CD8-positive, alpha-beta T cell (primary cell): ENCODE measurements at regions of chr12 and their contacts with region 1.

Region 1: DNA sequence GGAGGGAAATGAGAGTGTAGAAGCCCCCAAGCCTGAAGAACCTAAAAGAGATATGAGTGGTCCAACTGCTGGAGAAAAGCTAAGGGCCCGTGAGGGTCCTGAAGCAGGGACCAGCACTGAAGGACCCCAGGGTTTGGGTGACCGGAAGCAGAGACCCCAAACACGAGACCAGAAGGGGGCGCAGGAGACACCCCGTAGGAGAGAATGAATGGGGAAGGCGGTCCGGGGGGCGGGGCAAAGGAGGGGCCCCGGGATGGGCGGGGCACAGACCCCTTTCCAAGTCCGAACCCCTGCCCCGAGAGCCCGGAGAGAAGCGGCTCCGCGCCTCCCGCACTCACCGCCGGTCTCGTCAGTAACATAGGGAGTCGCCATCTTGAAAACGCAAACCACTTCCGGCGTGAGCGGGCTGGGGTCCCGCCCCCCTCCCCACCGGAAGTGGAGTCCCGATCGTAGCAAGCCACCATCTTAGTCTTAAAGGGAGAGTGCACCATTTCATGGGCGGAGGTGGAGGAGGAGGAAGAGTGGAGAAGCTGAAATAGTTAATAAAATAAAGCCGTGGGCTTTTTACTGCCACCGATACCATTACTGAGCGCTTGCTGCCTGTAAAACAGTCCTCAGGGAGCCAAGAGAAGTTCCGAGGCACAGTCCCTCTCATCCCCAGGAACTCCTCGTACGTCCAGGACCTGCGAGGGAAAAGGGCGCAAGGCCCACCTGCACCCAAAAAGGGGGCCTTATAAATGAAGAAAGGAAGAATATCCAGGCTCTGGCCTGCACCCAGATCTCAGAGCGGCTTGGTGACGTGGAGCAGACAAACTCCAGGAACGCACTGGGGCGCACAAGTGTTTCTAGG is 731 bp downstream of the PYM1 start:
- DNase-seq: peak; percentile 75 to 96 (median 88)
- ATAC-seq: peak; percentile 35
- H3K4me3 ChIP-seq: peak overlapping the region; percentile 90 to 98
- H3K4me3 Mint-ChIP-seq: peak overlapping the region; percentile 99
- H3K27ac ChIP-seq: peak overlapping the region; percentile 65 to 80
- H3K27ac Mint-ChIP-seq: peak overlapping the region; percentile 95
- H3K4me1 ChIP-seq: peaks cover 40% of the 10 kb centered on the region
- H3K4me1 Mint-ChIP-seq: peaks cover 51% of the 10 kb centered on the region
- H3K27me3 ChIP-seq: no peaks in the 10 kb centered on the region
- H3K27me3 Mint-ChIP-seq: no peaks in the 10 kb centered on the region
- CTCF ChIP-seq: peak; percentile 70

Region 2: GRCh38 chr12:55715833-55716581 is 211.0 kb before region 1 on chr12 and contains the start of gene BLOC1S1:
- CTCF ChIA-PET with region 1: no interaction called
- POLR2A ChIA-PET with region 1: interaction called, 8 read pairs
- intact Hi-C with region 1: loop called in 1 of 2 experiments (anchors 1 kb)
- DNase-seq: peak; percentile 80 to 96 (median 92)
- ATAC-seq: peak; percentile 96
- H3K4me3 ChIP-seq: peak within 1 kb of the TSS; percentile 84 to 90
- H3K4me3 Mint-ChIP-seq: peak within 1 kb of the TSS; percentile 94
- H3K27ac ChIP-seq: peak within 1 kb of the TSS; percentile 67 to 93
- H3K27ac Mint-ChIP-seq: peak within 1 kb of the TSS; percentile 90
- H3K4me1 ChIP-seq: peaks cover 23% of the 10 kb centered on the region
- H3K4me1 Mint-ChIP-seq: peaks cover 36% of the 10 kb centered on the region
- H3K27me3 ChIP-seq: no peaks in the 10 kb centered on the region
- H3K27me3 Mint-ChIP-seq: no peaks in the 10 kb centered on the region
- CTCF ChIP-seq: no peak
- total RNA-seq, gene BLOC1S1: 29.4 to 29.6 TPM

Region 3: DNA sequence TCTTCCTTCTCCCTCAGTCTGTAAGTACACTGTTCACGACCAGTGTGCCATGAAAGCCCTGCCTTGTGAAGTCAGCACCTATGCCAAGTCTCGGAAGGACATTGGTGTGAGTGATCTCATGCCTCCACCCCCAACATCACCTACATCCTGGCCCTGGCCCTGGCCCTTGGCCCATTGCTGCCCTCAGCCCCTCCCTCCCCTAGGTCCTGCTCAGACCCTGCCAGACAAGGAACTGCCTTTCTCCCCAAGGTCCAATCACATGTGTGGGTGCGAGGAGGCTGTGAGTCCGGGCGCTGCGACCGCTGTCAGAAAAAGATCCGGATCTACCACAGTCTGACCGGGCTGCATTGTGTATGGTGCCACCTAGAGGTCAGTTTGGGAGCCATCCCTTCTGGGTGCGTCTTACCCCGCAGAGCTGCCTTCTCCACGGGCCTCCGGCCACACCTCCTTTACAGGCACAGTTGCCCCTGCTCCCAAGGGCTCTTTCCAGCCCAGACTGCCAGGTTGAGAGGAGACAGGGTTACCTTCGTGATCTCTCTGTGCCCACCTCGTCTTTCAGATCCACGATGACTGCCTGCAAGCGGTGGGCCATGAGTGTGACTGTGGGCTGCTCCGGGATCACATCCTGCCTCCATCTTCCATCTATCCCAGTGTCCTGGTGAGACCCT is 13.2 kb after region 1 on chr12:
- CTCF ChIA-PET with region 1: interaction called, 178 read pairs
- POLR2A ChIA-PET with region 1: interaction called, 39 read pairs
- intact Hi-C with region 1: loop called (anchors 1 kb)
- DNase-seq: peak; percentile 68 to 91 (median 87)
- ATAC-seq: peak; percentile 92
- H3K4me3 ChIP-seq: no peak overlapping the region
- H3K4me3 Mint-ChIP-seq: peak overlapping the region; percentile 52
- H3K27ac ChIP-seq: peak overlapping the region in 1 of 2 experiments; percentile 60
- H3K27ac Mint-ChIP-seq: peak overlapping the region; percentile 87
- H3K4me1 ChIP-seq: peaks cover 55% of the 10 kb centered on the region
- H3K4me1 Mint-ChIP-seq: peaks cover 84% of the 10 kb centered on the region
- H3K27me3 ChIP-seq: no peaks in the 10 kb centered on the region
- H3K27me3 Mint-ChIP-seq: no peaks in the 10 kb centered on the region
- CTCF ChIP-seq: peak; percentile 84

Region 4: GRCh38 chr12:55973598-55974307 is 46.8 kb after region 1 on chr12 and contains the start of gene RAB5B:
- CTCF ChIA-PET with region 1: interaction called, 3 read pairs
- POLR2A ChIA-PET with region 1: interaction called, 44 read pairs
- intact Hi-C with region 1: loop called in 1 of 2 experiments (anchors 1 kb)
- DNase-seq: peak; percentile 94 to 100 (median 97)
- ATAC-seq: peak; percentile 87
- H3K4me3 ChIP-seq: peak within 1 kb of the TSS; percentile 81 to 84
- H3K4me3 Mint-ChIP-seq: no peak within 1 kb of the TSS
- H3K27ac ChIP-seq: peak within 1 kb of the TSS; percentile 76 to 90
- H3K27ac Mint-ChIP-seq: no peak within 1 kb of the TSS
- H3K4me1 ChIP-seq: peaks cover 18% of the 10 kb centered on the region
- H3K4me1 Mint-ChIP-seq: peaks cover 27% of the 10 kb centered on the region
- H3K27me3 ChIP-seq: no peaks in the 10 kb centered on the region
- H3K27me3 Mint-ChIP-seq: no peaks in the 10 kb centered on the region
- CTCF ChIP-seq: no peak
- total RNA-seq, gene RAB5B: 16.1 to 16.8 TPM

Region 5: DNA sequence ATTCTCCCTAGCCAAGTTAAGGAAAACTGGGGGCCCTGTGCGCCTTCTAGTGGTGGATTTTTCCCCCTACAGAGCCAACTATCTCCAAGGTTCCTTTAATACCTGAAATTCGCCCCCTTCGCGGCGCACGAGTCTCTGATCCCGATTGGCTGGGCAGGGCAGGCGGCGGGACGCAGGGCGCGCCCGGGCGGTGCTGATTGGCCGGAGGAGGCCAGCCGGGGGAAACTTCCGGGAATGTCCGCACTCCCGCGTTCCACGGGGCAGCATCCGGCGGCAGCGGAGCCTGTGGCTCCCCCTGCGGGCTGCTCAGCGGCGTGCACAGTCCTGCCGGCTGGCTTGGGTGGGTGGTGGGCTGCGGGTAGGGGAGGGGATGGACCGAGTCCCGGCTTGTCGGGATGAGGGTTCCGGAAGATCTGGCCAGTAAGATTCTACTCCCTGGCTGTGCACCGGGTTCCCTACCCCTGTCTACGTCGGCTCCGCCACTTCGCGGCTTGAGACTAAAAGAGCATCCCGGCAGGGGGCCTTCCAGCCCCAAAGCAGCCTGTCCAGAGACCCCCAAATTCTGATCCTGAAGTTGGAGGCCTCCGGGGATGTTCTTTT is 297.2 kb after region 1 on chr12 and contains the start of gene NABP2:
- CTCF ChIA-PET with region 1: no interaction called
- POLR2A ChIA-PET with region 1: no interaction called
- intact Hi-C with region 1: loop called in 1 of 2 experiments (anchors 1 kb)
- DNase-seq: peak; percentile 74 to 97 (median 91)
- ATAC-seq: peak; percentile 64
- H3K4me3 ChIP-seq: peak within 1 kb of the TSS; percentile 65 to 68
- H3K4me3 Mint-ChIP-seq: peak within 1 kb of the TSS; percentile 95
- H3K27ac ChIP-seq: peak within 1 kb of the TSS; percentile 53 to 85
- H3K27ac Mint-ChIP-seq: peak within 1 kb of the TSS; percentile 99
- H3K4me1 ChIP-seq: peaks cover 29% of the 10 kb centered on the region
- H3K4me1 Mint-ChIP-seq: peaks cover 44% of the 10 kb centered on the region
- H3K27me3 ChIP-seq: no peaks in the 10 kb centered on the region
- H3K27me3 Mint-ChIP-seq: no peaks in the 10 kb centered on the region
- CTCF ChIP-seq: peak; percentile 84
- total RNA-seq, gene NABP2: 6.8 to 7.4 TPM

Region 6: GRCh38 chr12:56688129-56688845 is 761.3 kb after region 1 on chr12 and contains the start of gene PTGES3:
- CTCF ChIA-PET with region 1: no interaction called
- POLR2A ChIA-PET with region 1: interaction called, 3 read pairs
- intact Hi-C with region 1: loop called in 1 of 2 experiments (anchors 5 kb)
- DNase-seq: peak; percentile 94 to 99 (median 97)
- ATAC-seq: peak; percentile 69
- H3K4me3 ChIP-seq: peak within 1 kb of the TSS; percentile 75 to 99
- H3K4me3 Mint-ChIP-seq: peak within 1 kb of the TSS; percentile 98
- H3K27ac ChIP-seq: peak within 1 kb of the TSS; percentile 97 to 98
- H3K27ac Mint-ChIP-seq: peak within 1 kb of the TSS; percentile 99
- H3K4me1 ChIP-seq: peaks cover 35% of the 10 kb centered on the region
- H3K4me1 Mint-ChIP-seq: peaks cover 34% of the 10 kb centered on the region
- H3K27me3 ChIP-seq: no peaks in the 10 kb centered on the region
- H3K27me3 Mint-ChIP-seq: no peaks in the 10 kb centered on the region
- CTCF ChIP-seq: no peak
- total RNA-seq, gene PTGES3: 148 to 154 TPM